HEK293T (cell line): ENCODE measurements at regions of chr11 and their contacts with region 1.

Region 1: DNA sequence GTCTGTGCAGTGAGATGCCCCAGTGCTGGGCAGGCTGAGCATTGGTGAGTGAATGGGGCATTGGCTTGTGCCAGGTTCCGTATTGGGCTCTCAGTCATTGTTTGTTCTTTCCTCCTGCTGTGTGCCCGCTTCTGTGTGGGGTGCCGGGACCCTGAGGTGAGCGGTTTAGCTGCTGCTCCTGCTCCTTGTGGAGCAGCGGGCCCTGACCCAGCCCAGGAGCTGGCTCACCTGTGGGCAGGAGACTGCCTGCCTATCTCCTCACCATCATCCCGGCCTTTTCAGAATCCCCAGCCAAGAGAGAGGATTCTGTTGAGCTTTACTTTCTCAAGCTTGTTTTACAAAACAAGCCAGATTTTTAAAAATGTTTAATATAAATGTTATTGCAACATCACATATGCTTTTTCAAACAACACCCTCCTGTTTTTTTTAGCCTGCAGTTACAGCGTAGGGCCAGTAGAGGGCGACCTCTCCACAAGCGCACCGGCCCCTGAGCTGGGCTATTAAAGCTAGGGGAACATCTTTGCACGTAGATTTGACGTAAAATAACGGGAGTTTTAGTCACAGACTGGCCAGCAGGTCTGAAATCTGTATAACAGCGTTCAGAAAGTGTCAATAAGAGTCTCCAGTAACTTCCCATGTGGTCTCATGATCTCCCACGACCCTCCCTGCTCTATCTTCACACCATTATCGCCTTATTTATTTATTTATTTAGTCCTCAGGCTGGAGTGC is 25.1 kb upstream of the RELT start:
- DNase-seq: peak; percentile 78

Region 2: DNA sequence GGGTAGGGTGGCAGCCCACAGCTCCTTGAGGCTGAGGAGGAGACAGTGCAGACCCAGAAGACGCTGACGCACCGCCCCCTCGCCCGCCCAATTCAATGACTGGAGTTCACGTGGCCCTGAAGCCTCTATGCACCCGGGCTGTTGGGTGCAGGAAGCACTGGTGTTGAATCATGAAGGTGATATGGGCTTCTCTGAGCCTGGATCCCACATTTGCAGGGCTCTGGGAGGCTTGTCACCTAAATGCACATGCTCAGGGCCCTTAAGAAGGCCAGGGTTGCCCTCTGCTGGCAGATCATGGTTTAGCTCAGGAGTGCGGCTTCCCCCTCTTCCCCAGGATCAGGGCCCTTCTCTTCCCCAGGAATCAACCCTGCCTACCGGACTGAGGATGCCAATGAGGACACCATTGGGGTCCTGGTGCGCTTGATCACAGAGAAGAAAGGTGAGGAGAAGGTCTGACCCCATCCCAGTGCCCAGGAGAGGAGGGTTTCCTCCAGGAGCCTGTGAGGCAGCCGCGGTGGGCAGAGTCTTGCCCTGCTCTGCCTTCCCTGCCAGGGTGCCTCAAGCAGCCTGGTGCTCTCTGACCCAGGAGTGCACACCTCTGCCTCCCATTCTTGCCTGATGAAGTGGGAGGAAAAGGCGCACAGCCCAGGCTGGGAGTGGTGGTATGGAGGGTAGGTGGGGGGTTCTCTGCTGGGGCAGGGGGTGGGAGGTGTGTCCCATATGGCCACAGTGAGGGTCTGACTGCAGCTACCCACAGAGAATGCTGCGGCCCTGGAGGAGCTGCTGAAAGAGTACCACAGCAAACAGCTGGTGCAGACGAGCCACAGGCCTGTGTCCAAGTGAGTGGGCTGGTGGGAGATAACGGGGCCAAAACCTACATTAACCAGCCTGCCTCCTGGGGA is 42.7 kb after region 1 on chr11:
- CTCF ChIA-PET with region 1: interaction called, 45 read pairs
- POLR2A ChIA-PET with region 1: interaction called, 4 read pairs
- DNase-seq: peak; percentile 81